GM18951 (cell line): ENCODE measurements at regions of chr19 and their contacts with region 1.

Region 1: DNA sequence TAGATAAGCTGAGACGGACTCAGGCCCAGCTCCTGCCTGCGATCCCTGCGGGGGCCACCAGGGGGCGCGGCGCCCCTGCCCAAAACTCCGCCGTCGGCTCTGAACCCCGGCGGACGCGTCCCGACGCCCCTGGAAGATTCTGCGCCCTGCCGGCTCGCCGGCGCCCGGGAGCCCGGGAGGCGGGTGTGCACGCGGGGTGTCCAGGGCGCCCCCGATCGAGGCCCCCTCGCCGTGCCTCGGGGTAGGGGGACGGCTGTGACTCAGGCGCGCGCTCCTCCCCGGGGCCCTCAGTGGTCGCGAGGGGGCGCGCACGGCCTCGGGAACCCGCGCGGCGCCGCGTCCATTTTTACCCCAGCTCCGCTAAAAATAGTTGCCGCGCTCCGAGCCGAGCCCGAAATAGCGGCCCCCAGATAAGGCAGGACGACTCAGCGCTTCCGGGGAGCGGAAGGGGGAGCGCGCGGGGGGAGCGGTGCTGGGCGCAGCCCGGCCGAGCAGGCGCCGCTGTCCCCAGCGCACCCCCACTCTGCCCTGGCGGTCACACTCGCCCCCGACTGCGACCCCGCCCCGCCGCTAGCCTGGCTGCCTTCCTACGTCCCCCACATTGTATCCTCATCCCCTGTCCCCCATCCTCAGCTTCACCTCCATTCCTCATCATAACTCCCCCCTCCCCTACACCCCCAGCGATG is 16.0 kb upstream of the ERCC1 start:
- POLR2A ChIP-seq: peak; percentile 64

Region 2: GRCh38 chr19:45391340-45391739 is 48.4 kb before region 1 on chr19:
- in situ Hi-C with region 1: no loop called
- POLR2A ChIP-seq: peak; percentile 23

Region 3: DNA sequence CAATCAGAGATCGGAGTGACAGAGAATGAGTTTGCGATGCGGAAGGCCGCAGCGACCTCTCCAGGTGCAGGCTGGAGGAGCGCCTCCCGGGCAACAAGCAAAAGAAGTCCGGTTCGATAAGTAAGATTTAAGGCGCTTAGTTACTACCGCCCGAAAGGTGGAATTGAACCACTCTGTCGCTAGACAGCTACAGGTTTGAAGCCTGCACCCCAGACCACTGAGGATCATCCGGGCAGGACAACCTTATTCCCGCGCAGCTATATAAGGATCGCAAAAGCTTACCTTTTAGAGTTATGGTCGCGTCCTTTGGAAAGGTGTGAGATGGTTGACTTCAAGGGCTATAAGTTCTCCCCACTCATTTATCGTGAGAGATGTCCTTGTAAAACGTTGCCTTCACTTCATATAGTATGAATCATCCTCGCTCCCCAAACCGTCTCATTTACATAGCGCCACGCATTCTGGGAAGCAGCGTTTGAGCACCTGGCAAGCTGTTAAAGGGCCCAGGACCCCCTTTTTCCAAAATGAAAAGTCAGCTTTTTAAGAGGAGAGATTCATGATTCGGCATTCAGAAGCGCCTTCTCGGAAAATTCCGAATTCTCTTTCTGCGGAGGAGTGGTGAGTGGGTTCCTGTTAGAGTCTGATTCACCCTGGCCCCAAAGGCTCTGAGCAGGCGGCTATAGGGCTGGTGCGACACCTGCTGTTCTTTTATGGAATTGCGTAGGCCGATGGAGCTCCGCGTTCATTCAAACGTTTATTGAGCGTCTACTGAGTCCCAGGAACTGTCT is 38.9 kb after region 1 on chr19:
- in situ Hi-C with region 1: loop called (anchors 5 kb)
- POLR2A ChIP-seq: peak; percentile 50